Ovary (tissue), 10 donors: ENCODE measurements at regions of chr5 and their contacts with region 1.

Region 1: DNA sequence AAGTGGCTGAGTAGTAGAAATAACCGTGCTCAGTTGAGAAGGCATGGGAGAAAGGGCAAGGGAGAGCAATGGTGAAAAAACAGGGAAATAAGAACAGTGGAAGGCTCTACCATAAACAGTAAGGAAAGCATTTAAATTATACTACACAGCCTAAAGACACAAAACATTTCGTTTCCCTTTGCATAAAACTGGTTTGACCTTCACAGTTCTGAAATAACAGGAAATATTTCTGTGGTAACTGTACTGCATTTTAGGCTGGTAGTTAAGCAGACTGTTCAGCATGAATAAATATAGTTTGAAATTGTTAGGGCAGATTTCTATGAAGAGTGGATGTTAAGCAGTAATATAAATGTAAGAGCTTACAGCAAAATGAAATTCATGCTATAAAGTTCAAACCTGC is 147.5 kb downstream of the CSNK1G3 start:
- DNase-seq: no peak
- H3K4me3 ChIP-seq: no peak overlapping the region
- H3K27ac ChIP-seq: no peak overlapping the region
- H3K4me1 ChIP-seq: no peaks in the 10 kb centered on the region
- H3K27me3 ChIP-seq: no peaks in the 10 kb centered on the region
- CTCF ChIP-seq: no peak
- EP300 ChIP-seq: no peak
- POLR2A ChIP-seq: no peak

Region 2: GRCh38 chr5:123628860-123629556 is 30.5 kb before region 1 on chr5:
- intact Hi-C with region 1: loop called in 1 of 4 experiments (anchors 1 kb)
- DNase-seq: no peak
- H3K4me3 ChIP-seq: no peak overlapping the region
- H3K27ac ChIP-seq: no peak overlapping the region
- H3K4me1 ChIP-seq: no peaks in the 10 kb centered on the region
- H3K27me3 ChIP-seq: no peaks in the 10 kb centered on the region
- CTCF ChIP-seq: no peak
- EP300 ChIP-seq: no peak
- POLR2A ChIP-seq: no peak